Activated CD4-positive, alpha-beta memory T cell treated with anti-CD3 and anti-CD28 coated beads, Interleukin-2, amount 10 ng/mL, durations not matched to agents 7 days and 5 days (primary cell): ENCODE measurements at regions of chr10 and their contacts with region 1.

Region 1: GRCh38 chr10:23314835-23315239 is 29.8 kb downstream of the C10orf67 start:
- DNase-seq: peak; percentile 34
- H3K4me3 Mint-ChIP-seq: no peak overlapping the region
- H3K27ac Mint-ChIP-seq: no peak overlapping the region
- H3K4me1 Mint-ChIP-seq: no peaks in the 10 kb centered on the region
- H3K27me3 Mint-ChIP-seq: peaks cover 5% of the 10 kb centered on the region

Region 2: DNA sequence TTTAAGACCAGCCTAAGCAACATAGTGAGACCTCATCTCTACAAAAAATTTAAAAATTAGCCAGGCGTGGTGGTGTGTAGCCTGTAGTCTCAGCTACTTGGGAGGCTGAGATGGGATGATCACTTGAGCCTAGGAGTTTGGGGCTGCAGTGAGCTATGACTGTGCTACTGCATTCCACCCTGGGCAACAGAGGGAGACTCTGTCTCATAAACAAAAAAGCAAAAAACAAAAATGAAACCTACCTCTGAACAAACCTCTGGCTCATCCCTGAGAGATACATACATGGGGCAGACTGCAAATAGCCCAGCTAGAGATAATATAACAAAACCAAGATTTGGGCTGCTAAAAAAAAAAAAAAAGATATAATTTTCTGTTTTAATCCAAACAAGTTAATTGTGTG is 10.3 kb after region 1 on chr10:
- CTCF ChIA-PET with region 1: interaction called, 11 read pairs
- POLR2A ChIA-PET with region 1: no interaction called
- DNase-seq: no peak
- H3K4me3 Mint-ChIP-seq: no peak overlapping the region
- H3K27ac Mint-ChIP-seq: no peak overlapping the region
- H3K4me1 Mint-ChIP-seq: peaks cover 2% of the 10 kb centered on the region
- H3K27me3 Mint-ChIP-seq: peaks cover 5% of the 10 kb centered on the region

Region 3: DNA sequence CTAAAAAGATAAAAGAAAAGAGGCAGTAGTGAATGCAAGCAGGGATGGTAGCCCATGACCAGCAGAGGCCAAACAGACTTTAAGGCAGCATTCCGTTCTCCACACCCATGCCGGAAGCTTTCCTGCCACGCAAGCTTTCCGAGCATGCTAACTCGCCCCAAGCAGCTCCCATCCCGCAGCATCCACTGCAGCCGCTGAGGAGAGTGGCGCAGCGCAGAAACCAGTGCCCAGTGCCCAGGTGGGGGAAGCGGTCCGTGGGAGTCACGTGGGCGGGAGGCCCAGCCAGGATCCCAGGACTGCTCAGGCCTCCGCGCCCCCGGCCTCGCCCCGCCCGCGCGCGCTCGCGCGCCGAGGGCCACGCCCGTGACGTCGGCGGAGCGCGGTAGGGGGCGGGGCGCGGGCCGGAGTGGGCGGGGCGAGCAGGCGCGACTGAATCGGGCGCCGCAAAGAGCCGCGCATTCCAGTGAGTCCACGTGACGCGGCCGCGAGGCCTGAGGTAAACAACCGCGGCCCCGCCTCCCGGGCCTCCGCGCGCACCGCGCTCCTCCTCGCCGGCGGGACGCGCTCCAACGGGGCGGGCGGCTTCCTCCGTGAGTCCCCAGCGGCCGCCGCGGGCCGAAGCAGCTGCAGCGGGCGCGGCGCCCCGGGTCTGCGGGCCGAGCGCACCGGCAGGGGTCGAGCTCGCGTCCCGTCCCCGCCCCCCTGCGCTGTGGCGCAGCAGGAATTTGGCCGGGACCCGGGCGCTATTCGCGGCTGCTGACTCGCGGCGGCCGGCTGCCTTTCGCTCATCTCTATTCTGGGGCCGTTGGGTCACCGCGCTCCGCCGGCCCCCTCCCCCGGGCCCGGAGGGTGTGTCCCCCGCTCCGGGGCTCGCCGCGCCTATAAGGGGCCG is 124.0 kb after region 1 on chr10 and contains the start of gene OTUD1:
- CTCF ChIA-PET with region 1: interaction called, 15 read pairs
- POLR2A ChIA-PET with region 1: no interaction called
- DNase-seq: peak; percentile 94
- H3K4me3 Mint-ChIP-seq: peak within 1 kb of the TSS; percentile 80
- H3K27ac Mint-ChIP-seq: peak within 1 kb of the TSS; percentile 71
- H3K4me1 Mint-ChIP-seq: peaks cover 36% of the 10 kb centered on the region
- H3K27me3 Mint-ChIP-seq: no peaks in the 10 kb centered on the region
- total RNA-seq, gene OTUD1: 23.4 to 23.9 TPM

Region 4: DNA sequence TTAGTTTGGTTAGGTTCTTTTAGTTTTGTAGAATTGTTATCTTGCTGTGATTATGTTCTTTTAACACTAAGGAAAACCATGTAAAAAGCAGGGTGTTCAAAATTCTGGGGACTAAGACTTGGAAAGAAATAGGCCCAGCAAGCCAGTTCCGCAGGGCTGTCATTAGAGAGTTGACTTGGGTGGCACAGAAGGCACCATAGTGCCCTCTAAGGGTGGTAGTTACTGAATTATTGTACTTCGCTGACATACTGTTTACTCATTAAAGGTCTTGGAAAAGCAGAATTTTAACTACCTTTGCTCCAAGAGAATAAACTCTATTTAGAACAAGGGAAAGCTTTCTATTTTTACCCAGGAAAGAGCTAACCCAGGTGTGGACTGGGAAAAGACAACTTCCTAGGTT is 210.6 kb after region 1 on chr10:
- CTCF ChIA-PET with region 1: interaction called, 54 read pairs
- POLR2A ChIA-PET with region 1: no interaction called
- DNase-seq: no peak
- H3K4me3 Mint-ChIP-seq: no peak overlapping the region
- H3K27ac Mint-ChIP-seq: no peak overlapping the region
- H3K4me1 Mint-ChIP-seq: no peaks in the 10 kb centered on the region
- H3K27me3 Mint-ChIP-seq: peaks cover 6% of the 10 kb centered on the region

Region 5: GRCh38 chr10:23568996-23569395 is 254.2 kb after region 1 on chr10:
- CTCF ChIA-PET with region 1: no interaction called
- POLR2A ChIA-PET with region 1: no interaction called
- DNase-seq: no peak
- H3K4me3 Mint-ChIP-seq: no peak overlapping the region
- H3K27ac Mint-ChIP-seq: no peak overlapping the region
- H3K4me1 Mint-ChIP-seq: no peaks in the 10 kb centered on the region
- H3K27me3 Mint-ChIP-seq: peaks cover 9% of the 10 kb centered on the region

Region 6: GRCh38 chr10:23664024-23664423 is 349.2 kb after region 1 on chr10:
- CTCF ChIA-PET with region 1: no interaction called
- POLR2A ChIA-PET with region 1: no interaction called
- DNase-seq: no peak
- H3K4me3 Mint-ChIP-seq: no peak overlapping the region
- H3K27ac Mint-ChIP-seq: no peak overlapping the region
- H3K4me1 Mint-ChIP-seq: no peaks in the 10 kb centered on the region
- H3K27me3 Mint-ChIP-seq: no peaks in the 10 kb centered on the region